SK-N-SH (cell line): ENCODE measurements at regions of chr5 and their contacts with region 1.

Region 1: GRCh38 chr5:14440582-14441431 is 140.8 kb upstream of the OTULINL start:
- DNase-seq: peak; percentile 83
- H3K4me3 ChIP-seq: peak overlapping the region; percentile 80 to 84
- H3K27ac ChIP-seq: peak overlapping the region; percentile 98 to 100
- H3K4me1 ChIP-seq: peaks cover 37 to 38% of the 10 kb centered on the region in 2 experiments
- H3K27me3 ChIP-seq: no peaks in the 10 kb centered on the region
- CTCF ChIP-seq: no peak
- EP300 ChIP-seq: peak; percentile 80 to 87; a peak in 3 of 4 replicates
- RAD21 ChIP-seq: peak; percentile 32

Region 2: GRCh38 chr5:14142827-14143548 is 297.8 kb before region 1 on chr5 and contains the start of gene TRIO:
- CTCF ChIA-PET with region 1: no interaction called
- POLR2A ChIA-PET with region 1: no interaction called
- DNase-seq: peak; percentile 97
- H3K4me3 ChIP-seq: peak within 1 kb of the TSS; percentile 94 to 95
- H3K27ac ChIP-seq: peak within 1 kb of the TSS; percentile 87 to 93
- H3K4me1 ChIP-seq: peaks cover 23 to 24% of the 10 kb centered on the region in 2 experiments; a peak in 3 of 4 replicates
- H3K27me3 ChIP-seq: no peaks in the 10 kb centered on the region
- CTCF ChIP-seq: peak; percentile 56
- EP300 ChIP-seq: peak in 1 of 2 experiments; percentile 40; a peak in 1 of 4 replicates
- RAD21 ChIP-seq: peak; percentile 24
- polyA plus RNA-seq, gene TRIO: 225 and 229 TPM in 2 replicates

Region 3: DNA sequence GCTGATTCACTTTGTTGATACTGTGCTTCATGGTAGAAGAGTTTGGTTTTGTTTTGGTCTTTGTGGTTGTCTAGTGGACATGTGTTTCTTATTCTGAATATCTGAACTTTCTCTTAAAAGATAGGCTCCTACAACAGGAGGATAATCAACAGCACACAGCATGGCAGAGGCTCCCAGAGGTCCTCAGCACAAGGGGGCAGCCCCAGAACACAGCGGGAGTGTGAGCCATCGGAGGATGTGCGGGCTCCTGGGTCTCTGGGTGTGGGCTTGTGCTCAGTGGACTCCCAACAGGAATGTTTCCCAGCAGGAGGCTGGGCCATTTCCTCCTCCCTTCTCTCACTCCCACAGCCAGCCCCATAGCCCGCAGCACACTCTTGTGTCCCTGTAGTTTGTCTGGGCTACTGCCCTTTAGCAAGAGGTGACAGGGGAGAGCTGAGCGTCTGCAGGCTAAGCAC is 23.5 kb before region 1 on chr5:
- CTCF ChIA-PET with region 1: interaction called, 14 read pairs
- POLR2A ChIA-PET with region 1: interaction called, 13 read pairs
- DNase-seq: peak; percentile 88
- H3K4me3 ChIP-seq: no peak overlapping the region
- H3K27ac ChIP-seq: peak overlapping the region; percentile 98 to 100
- H3K4me1 ChIP-seq: peaks cover 63 to 81% of the 10 kb centered on the region in 2 experiments
- H3K27me3 ChIP-seq: no peaks in the 10 kb centered on the region
- CTCF ChIP-seq: peak; percentile 41
- EP300 ChIP-seq: peak; percentile 10 to 99; a peak in 2 of 4 replicates
- RAD21 ChIP-seq: peak; percentile 70

Region 4: GRCh38 chr5:14469551-14470377 is 29.0 kb after region 1 on chr5:
- CTCF ChIA-PET with region 1: no interaction called
- POLR2A ChIA-PET with region 1: interaction called, 13 read pairs
- DNase-seq: peak; percentile 78
- H3K4me3 ChIP-seq: no peak overlapping the region
- H3K27ac ChIP-seq: peak overlapping the region; percentile 45 to 99; a peak in 3 of 4 replicates
- H3K4me1 ChIP-seq: peaks cover 12 to 41% of the 10 kb centered on the region in 2 experiments; a peak in 3 of 4 replicates
- H3K27me3 ChIP-seq: no peaks in the 10 kb centered on the region
- CTCF ChIP-seq: no peak
- EP300 ChIP-seq: peak in 1 of 2 experiments; percentile 84; a peak in 2 of 4 replicates
- RAD21 ChIP-seq: peak; percentile 34